Heart left ventricle (tissue), 16 donors: ENCODE measurements at regions of chr17 and their contacts with region 1.

Region 1: DNA sequence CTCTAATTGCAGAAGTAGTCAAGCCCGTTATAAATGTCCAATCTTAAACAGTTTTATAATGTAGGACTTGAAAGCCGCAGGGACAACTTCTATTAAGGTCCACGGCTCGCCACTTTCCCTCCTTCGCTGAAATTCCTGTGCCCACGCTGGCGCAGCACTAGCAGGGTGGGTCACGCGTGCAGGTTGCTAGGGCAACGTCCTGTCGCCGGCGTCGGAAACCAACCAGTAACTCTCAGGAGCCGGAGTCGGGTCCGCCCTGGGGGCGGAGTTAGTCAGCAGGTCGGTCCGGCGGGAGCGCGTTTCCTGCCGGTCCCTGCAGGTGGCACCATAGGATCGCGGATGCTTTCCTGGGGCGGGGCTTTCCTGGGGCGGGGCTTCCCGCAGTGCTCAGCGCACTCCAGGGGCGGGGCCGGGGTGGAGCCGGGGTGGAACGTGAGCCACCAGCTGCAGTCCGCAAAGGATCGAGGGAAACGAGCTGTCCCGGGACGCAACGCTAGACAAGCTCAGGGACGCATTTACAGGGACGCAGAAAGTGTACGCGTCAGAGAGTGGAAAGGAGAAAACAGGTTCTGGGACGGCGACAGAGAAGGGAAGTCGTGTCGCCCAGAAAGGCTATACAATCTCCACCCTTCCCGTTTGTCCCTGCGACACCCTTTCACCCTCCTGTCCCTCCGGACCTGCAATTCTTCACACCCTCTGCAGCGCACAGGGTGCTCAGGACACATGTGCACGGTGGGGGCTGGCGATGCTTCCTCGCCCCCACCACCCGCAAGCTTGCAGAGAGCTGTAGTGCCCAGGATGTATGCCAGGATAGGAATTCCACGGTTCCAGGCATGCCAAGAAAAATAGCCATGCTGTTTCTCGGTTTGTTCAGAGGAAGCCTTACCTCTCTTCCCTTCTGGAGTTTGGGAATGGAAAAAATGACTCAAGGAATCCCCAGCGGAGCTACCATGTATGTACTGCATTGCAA is 12.4 kb downstream of the COPZ2 start:
- DNase-seq: peak; percentile 97 to 99 (median 97)
- ATAC-seq: peak; percentile 88 to 92 (median 89)
- H3K4me3 ChIP-seq: peak overlapping the region; percentile 22 to 69 (median 53)
- H3K27ac ChIP-seq: peak overlapping the region; percentile 7 to 90 (median 80)
- H3K4me1 ChIP-seq: peaks cover 6 to 43% (median 38%) of the 10 kb centered on the region in 12 donors
- H3K27me3 ChIP-seq: peaks cover 0 to 27% (median 0%) of the 10 kb centered on the region in 9 donors
- CTCF ChIP-seq: peak; percentile 63 to 99 (median 76)
- POLR2A ChIP-seq: peak in 1 of 2 donors; percentile 40

Region 2: GRCh38 chr17:47895856-47896671 is 129.2 kb before region 1 on chr17 and contains the start of gene SP2:
- intact Hi-C with region 1: no loop called
- DNase-seq: peak; percentile 99 to 100 (median 99)
- ATAC-seq: peak; percentile 95 to 97 (median 96)
- H3K4me3 ChIP-seq: peak within 1 kb of the TSS; percentile 72 to 94 (median 79)
- H3K27ac ChIP-seq: peak within 1 kb of the TSS; percentile 98 to 100 (median 99)
- H3K4me1 ChIP-seq: peaks cover 0 to 58% (median 48%) of the 10 kb centered on the region in 12 donors
- H3K27me3 ChIP-seq: no peaks in the 10 kb centered on the region
- CTCF ChIP-seq: peak in 7 of 12 donors; percentile 3 to 53 (median 30)
- POLR2A ChIP-seq: peak; percentile 73 to 90
- total RNA-seq, gene SP2: 11.1 to 21.2 (median 16.7) TPM

Region 3: GRCh38 chr17:48047741-48048383 is 22.6 kb after region 1 on chr17 and contains the start of gene NFE2L1:
- intact Hi-C with region 1: loop called in 3 of 10 experiments (anchors 1 kb)
- DNase-seq: peak; percentile 99 to 100 (median 100)
- ATAC-seq: peak; percentile 86 to 95 (median 90)
- H3K4me3 ChIP-seq: peak within 1 kb of the TSS; percentile 52 to 96 (median 86)
- H3K27ac ChIP-seq: peak within 1 kb of the TSS; percentile 96 to 100 (median 99)
- H3K4me1 ChIP-seq: peaks cover 9 to 61% (median 49%) of the 10 kb centered on the region in 12 donors
- H3K27me3 ChIP-seq: no peaks in the 10 kb centered on the region
- CTCF ChIP-seq: no peak
- POLR2A ChIP-seq: peak in 1 of 2 donors; percentile 56
- total RNA-seq, gene NFE2L1: 375 to 1,055 (median 606) TPM

Region 4: GRCh38 chr17:48074315-48075081 is 49.3 kb after region 1 on chr17:
- intact Hi-C with region 1: loop called (anchors 1 to 2 kb)
- DNase-seq: peak in 4 of 5 donors; percentile 74 to 80 (median 76)
- ATAC-seq: peak; percentile 75 to 87 (median 83)
- H3K4me3 ChIP-seq: no peak overlapping the region
- H3K27ac ChIP-seq: peak overlapping the region in 1 of 12 donors; percentile 37
- H3K4me1 ChIP-seq: peaks cover 0 to 9% (median 2%) of the 10 kb centered on the region in 12 donors
- H3K27me3 ChIP-seq: no peaks in the 10 kb centered on the region
- CTCF ChIP-seq: peak; percentile 74 to 90 (median 84)
- POLR2A ChIP-seq: no peak

Region 5: GRCh38 chr17:48101012-48101720 is 75.9 kb after region 1 on chr17 and contains the start of gene CBX1:
- intact Hi-C with region 1: loop called in 2 of 10 experiments (anchors 2 kb)
- DNase-seq: peak; percentile 94 to 98 (median 96)
- ATAC-seq: peak; percentile 97 to 99 (median 99)
- H3K4me3 ChIP-seq: peak within 1 kb of the TSS; percentile 76 to 98 (median 90)
- H3K27ac ChIP-seq: peak within 1 kb of the TSS; percentile 26 to 94 (median 90)
- H3K4me1 ChIP-seq: peaks cover 0 to 26% (median 10%) of the 10 kb centered on the region in 12 donors
- H3K27me3 ChIP-seq: no peaks in the 10 kb centered on the region
- CTCF ChIP-seq: no peak
- POLR2A ChIP-seq: peak in 1 of 2 donors; percentile 72
- total RNA-seq, gene CBX1: 28.5 to 43.8 (median 37.9) TPM

Region 6: DNA sequence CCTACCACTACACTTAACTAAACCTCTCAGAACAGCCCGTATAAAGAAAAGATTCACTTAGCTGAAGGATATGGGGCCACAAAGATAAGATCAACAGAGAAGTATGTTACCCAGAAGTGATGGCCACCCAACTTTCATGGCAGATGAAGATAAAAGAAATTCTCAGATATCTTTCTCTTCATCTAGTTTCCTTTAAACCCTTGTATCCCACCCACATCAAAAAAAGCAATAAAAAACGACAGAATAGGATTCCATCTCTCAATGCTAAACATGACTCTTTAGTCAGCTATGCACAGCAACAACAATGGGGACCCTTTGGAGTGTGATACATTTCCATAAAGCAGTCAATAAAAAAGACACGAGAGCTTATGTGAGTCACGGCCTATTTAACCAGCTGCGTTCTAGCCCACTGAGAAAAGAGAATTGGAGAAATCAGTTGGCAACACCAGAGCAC is 168.9 kb after region 1 on chr17:
- intact Hi-C with region 1: no loop called
- DNase-seq: no peak
- ATAC-seq: no peak
- H3K4me3 ChIP-seq: no peak overlapping the region
- H3K27ac ChIP-seq: no peak overlapping the region
- H3K4me1 ChIP-seq: no peaks in the 10 kb centered on the region
- H3K27me3 ChIP-seq: peaks cover 0 to 54% (median 7%) of the 10 kb centered on the region in 9 donors
- CTCF ChIP-seq: no peak
- POLR2A ChIP-seq: no peak